Lower leg skin (tissue), 4 donors: ENCODE measurements at regions of chr12 and their contacts with region 1.

Region 1: DNA sequence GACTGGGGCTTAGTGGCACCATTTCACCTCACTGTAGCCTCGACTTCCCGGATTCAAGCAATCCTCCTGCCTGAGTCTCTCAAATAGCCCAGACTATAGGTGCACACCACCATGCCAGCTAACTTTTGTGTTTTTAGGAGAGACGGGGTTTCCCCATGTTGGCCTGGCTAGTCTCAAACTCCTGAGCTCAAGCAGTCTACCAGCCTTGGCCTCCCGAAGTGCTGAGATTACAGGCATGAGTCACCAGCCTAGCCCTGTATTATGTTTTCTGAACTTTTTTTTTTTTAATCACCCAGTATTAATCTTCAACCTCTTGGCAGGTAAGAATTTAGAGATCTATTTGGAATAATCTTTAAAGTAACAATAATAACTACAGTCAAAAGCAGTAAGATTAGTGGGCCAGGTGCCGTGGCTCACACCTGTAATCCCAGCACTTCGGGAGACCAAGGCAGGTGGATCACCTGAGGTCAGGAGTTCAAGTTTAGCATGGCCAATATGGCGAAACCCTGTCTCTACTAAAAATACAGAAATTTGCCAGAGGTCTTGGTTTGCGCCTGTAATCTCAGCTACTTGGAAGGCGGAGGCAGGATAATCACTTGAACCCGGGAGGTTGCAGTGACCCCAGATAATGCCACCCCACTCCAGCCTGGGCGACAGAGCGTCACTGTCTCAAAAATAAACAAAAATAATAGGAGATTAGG is 8.6 kb downstream of the NANOG start:
- DNase-seq: peak in 1 of 2 donors; percentile 10
- H3K4me3 ChIP-seq: no peak overlapping the region
- CTCF ChIP-seq: no peak
- POLR2A ChIP-seq: no peak

Region 2: DNA sequence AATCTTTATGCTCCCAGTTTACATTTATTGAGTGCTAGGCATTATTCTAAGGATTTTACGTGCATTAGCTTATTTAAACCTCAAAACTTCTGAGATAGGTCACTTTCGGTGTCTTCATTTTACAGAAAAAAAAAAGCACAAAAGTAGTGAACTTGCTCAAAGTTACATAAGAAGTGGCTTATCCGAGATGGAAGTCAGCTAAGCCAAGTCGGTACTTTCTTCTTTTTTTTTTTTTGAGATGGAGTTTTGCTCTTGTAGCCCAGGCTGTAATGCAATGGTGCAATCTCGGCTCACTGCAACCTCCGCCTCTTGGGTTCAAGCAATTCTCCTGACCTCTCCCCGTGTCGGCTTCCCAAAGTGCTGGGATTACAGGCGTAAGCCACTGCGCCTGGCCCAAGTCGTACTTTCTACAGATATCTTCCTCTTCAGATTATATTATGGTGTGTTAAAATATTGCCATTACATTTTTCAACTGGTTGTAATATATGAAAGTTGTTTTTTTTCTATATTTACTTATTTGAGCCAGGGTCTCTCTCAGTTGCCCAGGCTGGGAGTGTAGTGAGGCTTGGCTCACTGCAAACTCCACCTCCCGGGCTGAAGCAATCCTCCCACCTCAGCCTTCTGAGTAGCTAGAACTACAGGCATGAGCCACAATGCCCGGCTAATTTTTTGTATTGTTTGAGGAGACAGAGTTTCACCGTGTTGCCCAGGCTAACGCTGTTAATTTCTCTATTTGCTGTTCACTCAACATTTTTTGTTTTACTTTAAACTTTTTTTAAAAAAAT is 77.7 kb before region 1 on chr12:
- intact Hi-C with region 1: no loop called
- DNase-seq: no peak
- H3K4me3 ChIP-seq: no peak overlapping the region
- CTCF ChIP-seq: no peak
- POLR2A ChIP-seq: no peak

Region 3: DNA sequence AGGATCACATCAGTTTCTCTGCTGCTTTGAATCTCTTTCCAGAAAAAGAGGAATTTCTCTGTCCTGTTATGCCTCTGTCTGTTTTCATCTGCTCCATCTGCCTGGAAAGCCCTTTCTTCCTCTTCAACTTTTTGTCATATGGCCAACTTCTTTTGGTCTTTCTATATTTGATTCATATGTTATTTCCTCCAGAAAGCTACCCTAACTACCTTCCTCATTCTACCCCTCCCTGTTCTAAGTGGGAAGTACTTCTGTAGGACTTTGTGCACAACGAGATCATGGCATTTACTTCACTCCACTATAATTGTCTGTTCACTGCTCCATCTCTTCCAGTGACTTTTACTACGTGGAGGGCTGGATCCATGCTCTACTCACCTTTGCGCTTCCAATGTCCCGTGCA is 721.3 kb after region 1 on chr12:
- intact Hi-C with region 1: loop called (anchors 5 kb)
- DNase-seq: no peak
- H3K4me3 ChIP-seq: no peak overlapping the region
- CTCF ChIP-seq: no peak
- POLR2A ChIP-seq: no peak